GM12878 (cell line): ENCODE measurements at regions of chr5 and their contacts with region 1.

Region 1: GRCh38 chr5:56481428-56482357 is 248.6 kb upstream of the ANKRD55 start:
- DNase-seq: peak; percentile 23
- ATAC-seq: peak; percentile 58
- H3K4me3 ChIP-seq: peak overlapping the region; percentile 87
- H3K27ac ChIP-seq: peak overlapping the region; percentile 4; the same call in 1 of the 2 replicates
- H3K4me1 ChIP-seq: peaks cover 24% of the 10 kb centered on the region
- H3K27me3 ChIP-seq: no peaks in the 10 kb centered on the region
- CTCF ChIP-seq: peak; percentile 15 to 31 (median 26); a peak in 2 of 6 replicates
- EP300 ChIP-seq: no peak
- POLR2A ChIP-seq: no peak
- RAD21 ChIP-seq: peak; percentile 32; the same call in 1 of the 2 replicates

Region 2: GRCh38 chr5:55338810-55339243 is 1142.9 kb before region 1 on chr5:
- CTCF ChIA-PET with region 1: no interaction called
- POLR2A ChIA-PET with region 1: no interaction called
- RAD21 ChIA-PET with region 1: no interaction called
- SMC1A ChIA-PET with region 1: no interaction called
- in situ Hi-C with region 1: no loop called
- intact Hi-C with region 1: no loop called
- DNase-seq: peak; percentile 48
- ATAC-seq: peak; percentile 92
- H3K4me3 ChIP-seq: no peak overlapping the region
- H3K27ac ChIP-seq: peak overlapping the region; percentile 9; the same call in 1 of the 2 replicates
- H3K4me1 ChIP-seq: peaks cover 3% of the 10 kb centered on the region; the same call in 1 of the 2 replicates
- H3K27me3 ChIP-seq: no peaks in the 10 kb centered on the region
- CTCF ChIP-seq: no peak
- EP300 ChIP-seq: no peak
- POLR2A ChIP-seq: no peak
- RAD21 ChIP-seq: no peak

Region 3: DNA sequence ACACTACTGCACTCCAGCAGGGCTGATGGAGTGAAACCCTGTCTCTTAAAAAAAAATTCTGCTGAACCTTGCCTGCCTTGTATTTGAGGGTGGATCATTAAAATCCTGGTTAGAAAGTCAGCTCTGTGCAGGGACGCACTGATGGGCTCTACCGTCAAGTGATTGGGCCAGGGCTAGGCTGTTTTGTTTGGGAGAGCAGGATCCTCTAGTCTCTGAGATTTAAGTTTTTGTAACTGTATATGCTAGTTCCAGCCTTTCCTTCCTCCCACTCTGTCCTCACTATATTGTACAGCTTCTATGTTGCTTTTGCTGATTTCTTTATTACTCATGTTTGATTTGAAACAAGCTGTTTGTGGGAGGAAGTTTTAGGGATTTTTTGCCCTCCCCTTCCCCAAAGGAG is 732.3 kb before region 1 on chr5:
- CTCF ChIA-PET with region 1: no interaction called
- POLR2A ChIA-PET with region 1: no interaction called
- RAD21 ChIA-PET with region 1: no interaction called
- SMC1A ChIA-PET with region 1: no interaction called
- in situ Hi-C with region 1: no loop called
- intact Hi-C with region 1: no loop called
- DNase-seq: no peak
- ATAC-seq: peak; percentile 50
- H3K4me3 ChIP-seq: no peak overlapping the region
- H3K27ac ChIP-seq: no peak overlapping the region
- H3K4me1 ChIP-seq: no peaks in the 10 kb centered on the region
- H3K27me3 ChIP-seq: no peaks in the 10 kb centered on the region
- CTCF ChIP-seq: no peak
- EP300 ChIP-seq: no peak
- POLR2A ChIP-seq: no peak
- RAD21 ChIP-seq: no peak

Region 4: GRCh38 chr5:56415356-56415765 is 66.3 kb before region 1 on chr5:
- CTCF ChIA-PET with region 1: interaction called, 3 read pairs
- POLR2A ChIA-PET with region 1: interaction called, 3 read pairs
- RAD21 ChIA-PET with region 1: interaction called, 24 read pairs
- SMC1A ChIA-PET with region 1: interaction called, 25 read pairs
- in situ Hi-C with region 1: no loop called
- intact Hi-C with region 1: loop called (anchors 2 kb)
- DNase-seq: peak; percentile 92
- ATAC-seq: peak; percentile 84
- H3K4me3 ChIP-seq: peak overlapping the region; percentile 48; the same call in 1 of the 2 replicates
- H3K27ac ChIP-seq: peak overlapping the region; percentile 79
- H3K4me1 ChIP-seq: peaks cover 40% of the 10 kb centered on the region
- H3K27me3 ChIP-seq: no peaks in the 10 kb centered on the region
- CTCF ChIP-seq: no peak
- EP300 ChIP-seq: peak in 1 of 2 experiments; percentile 39; a peak in 2 of 4 replicates
- POLR2A ChIP-seq: 0 out of 2 replicates have a peak, but pooled peaks have one; percentile 26
- RAD21 ChIP-seq: 0 out of 2 replicates have a peak, but pooled peaks have one; percentile 10

Region 5: DNA sequence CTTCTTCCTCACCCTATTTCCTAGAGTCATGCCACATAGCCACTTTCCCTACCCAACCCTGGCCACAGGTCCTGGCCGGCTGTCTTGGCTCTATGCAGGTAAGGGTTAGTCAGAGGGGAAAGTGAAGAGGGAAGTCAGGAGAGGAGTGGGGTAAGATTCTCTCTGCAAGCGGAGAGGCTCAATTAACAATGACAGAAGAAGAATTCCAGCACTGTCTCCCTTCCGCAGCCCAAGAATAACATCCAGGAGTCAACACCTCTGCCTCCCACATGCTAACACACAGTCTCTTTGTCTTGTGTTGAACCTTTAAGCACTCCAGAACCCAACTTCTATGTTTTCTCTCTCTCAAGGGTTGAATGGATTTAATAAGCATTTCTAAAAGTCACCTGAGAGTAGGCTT is 13.4 kb before region 1 on chr5:
- CTCF ChIA-PET with region 1: interaction called, 18 read pairs
- POLR2A ChIA-PET with region 1: no interaction called
- RAD21 ChIA-PET with region 1: no interaction called
- SMC1A ChIA-PET with region 1: interaction called, 11 read pairs
- in situ Hi-C with region 1: no loop called
- intact Hi-C with region 1: no loop called
- DNase-seq: no peak
- ATAC-seq: no peak
- H3K4me3 ChIP-seq: no peak overlapping the region
- H3K27ac ChIP-seq: no peak overlapping the region
- H3K4me1 ChIP-seq: no peaks in the 10 kb centered on the region
- H3K27me3 ChIP-seq: 0 out of 4 replicates have a peak, but pooled peaks cover 0 to 3% of the 10 kb centered on the region in 2 experiments
- CTCF ChIP-seq: no peak
- EP300 ChIP-seq: no peak
- POLR2A ChIP-seq: no peak
- RAD21 ChIP-seq: no peak

Region 6: GRCh38 chr5:56588636-56589480 is 107.2 kb after region 1 on chr5:
- CTCF ChIA-PET with region 1: no interaction called
- POLR2A ChIA-PET with region 1: interaction called, 3 read pairs
- RAD21 ChIA-PET with region 1: interaction called, 6 read pairs
- SMC1A ChIA-PET with region 1: interaction called, 4 read pairs
- in situ Hi-C with region 1: no loop called
- intact Hi-C with region 1: loop called (anchors 5 kb)
- DNase-seq: peak; percentile 78
- ATAC-seq: peak; percentile 99
- H3K4me3 ChIP-seq: peak overlapping the region; percentile 38; the same call in 1 of the 2 replicates
- H3K27ac ChIP-seq: peak overlapping the region; percentile 82
- H3K4me1 ChIP-seq: peaks cover 22% of the 10 kb centered on the region
- H3K27me3 ChIP-seq: no peaks in the 10 kb centered on the region
- CTCF ChIP-seq: no peak
- EP300 ChIP-seq: peak; percentile 73 to 96
- POLR2A ChIP-seq: peak; percentile 69
- RAD21 ChIP-seq: peak; percentile 17; the same call in 1 of the 2 replicates